K562 (cell line): ENCODE measurements at regions of chr1 and their contacts with region 1.

Region 1: DNA sequence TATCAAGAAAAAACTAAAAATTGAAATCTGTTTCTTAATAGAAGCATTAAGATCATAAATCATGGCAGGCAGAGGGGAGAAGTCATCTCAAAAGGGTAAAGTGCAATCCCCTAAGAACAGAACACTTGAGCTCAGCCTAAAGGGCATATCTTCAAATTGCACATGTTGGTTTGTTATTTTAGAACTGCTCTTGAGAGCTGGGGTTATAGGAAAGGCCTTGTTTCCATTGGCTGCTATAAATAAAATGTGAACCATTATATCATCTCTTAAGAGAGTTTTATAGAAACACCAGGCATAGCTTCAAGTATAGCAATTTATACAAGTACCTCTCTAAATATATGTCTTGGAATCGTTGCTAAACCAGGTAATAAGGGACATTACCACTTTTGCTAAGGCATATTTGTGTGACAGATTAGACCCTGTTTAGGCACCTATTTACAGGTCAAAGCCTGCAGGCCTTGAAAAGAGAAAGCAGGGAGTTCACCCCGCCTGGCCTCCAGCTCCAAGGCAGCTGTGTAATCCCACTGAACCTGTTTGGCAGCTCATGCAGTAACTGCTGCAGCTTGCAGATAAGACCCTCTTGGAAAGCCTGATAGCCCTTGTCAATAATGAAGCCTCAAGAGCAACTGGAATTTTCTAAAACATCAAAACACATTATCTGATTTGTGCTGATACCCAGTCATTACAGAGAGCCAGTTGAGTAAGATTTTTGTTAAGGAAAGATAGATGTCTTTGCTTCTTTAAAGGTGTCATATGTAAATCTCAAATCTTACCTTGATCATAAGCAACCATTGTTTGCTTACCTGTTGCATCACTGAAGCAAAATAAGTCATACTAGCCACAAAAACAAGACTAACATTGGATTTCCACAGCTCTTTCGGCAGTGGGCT is 24.2 kb upstream of the SYDE2 start:
- DNase-seq: peak; percentile 76 to 93 (median 84)
- ATAC-seq: peak; percentile 89
- H3K4me3 ChIP-seq: no peak overlapping the region
- H3K27ac ChIP-seq: peak overlapping the region; percentile 15
- H3K4me1 ChIP-seq: peaks cover 23 to 45% of the 10 kb centered on the region in 2 experiments
- H3K27me3 ChIP-seq: no peaks in the 10 kb centered on the region
- CTCF ChIP-seq: no peak
- EP300 ChIP-seq: peak; percentile 99
- POLR2A ChIP-seq: no peak
- RAD21 ChIP-seq: no peak

Region 2: GRCh38 chr1:85109475-85109874 is 115.5 kb before region 1 on chr1:
- CTCF ChIA-PET with region 1: no interaction called
- POLR2A ChIA-PET with region 1: no interaction called
- in situ Hi-C with region 1: no loop called
- intact Hi-C with region 1: no loop called
- DNase-seq: peak; percentile 23 to 76 (median 52)
- ATAC-seq: peak; percentile 100
- H3K4me3 ChIP-seq: no peak overlapping the region
- H3K27ac ChIP-seq: no peak overlapping the region
- H3K4me1 ChIP-seq: no peaks in the 10 kb centered on the region
- H3K27me3 ChIP-seq: peaks cover 0 to 6% of the 10 kb centered on the region in 2 experiments; a peak in 1 of 5 replicates
- CTCF ChIP-seq: peak; percentile 83 to 91 (median 90)
- EP300 ChIP-seq: no peak
- POLR2A ChIP-seq: no peak
- RAD21 ChIP-seq: peak; percentile 94 to 96

Region 3: DNA sequence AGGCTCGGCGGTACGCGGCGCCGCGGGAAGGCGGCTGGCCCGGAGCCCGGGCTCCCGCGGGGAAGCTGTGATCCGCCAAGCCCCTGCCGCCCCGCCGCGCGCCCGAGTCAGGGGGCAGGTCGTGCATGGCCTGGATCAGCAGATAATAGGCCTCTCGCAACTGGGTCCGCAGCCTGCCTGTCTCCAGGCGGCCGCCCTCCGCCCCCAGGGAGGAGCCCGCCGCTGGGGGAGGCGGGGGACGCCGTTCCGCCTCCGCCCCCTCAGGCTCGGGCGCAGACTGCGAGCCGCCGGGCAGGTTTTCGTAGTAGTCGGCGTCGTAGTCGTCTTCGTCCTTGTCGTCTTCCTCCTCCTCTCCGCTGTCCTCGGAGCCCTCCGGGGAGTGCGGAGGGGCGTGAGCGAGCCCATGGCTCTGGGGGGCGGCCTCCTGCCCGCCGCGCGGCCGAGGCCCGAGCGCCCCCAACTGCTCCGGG is 24.1 kb before region 1 on chr1 and contains the start of gene SYDE2:
- CTCF ChIA-PET with region 1: no interaction called
- POLR2A ChIA-PET with region 1: interaction called, 12 read pairs
- in situ Hi-C with region 1: no loop called
- intact Hi-C with region 1: loop called (anchors 1 kb)
- DNase-seq: peak; percentile 91 to 95 (median 92)
- ATAC-seq: peak; percentile 90
- H3K4me3 ChIP-seq: peak within 1 kb of the TSS; percentile 68
- H3K27ac ChIP-seq: peak within 1 kb of the TSS; percentile 90
- H3K4me1 ChIP-seq: peaks cover 3 to 17% of the 10 kb centered on the region in 2 experiments; a peak in 4 of 5 replicates
- H3K27me3 ChIP-seq: no peaks in the 10 kb centered on the region
- CTCF ChIP-seq: no peak
- EP300 ChIP-seq: no peak
- POLR2A ChIP-seq: peak; percentile 86
- RAD21 ChIP-seq: no peak
- polyA plus RNA-seq, gene SYDE2: 0.39 to 0.77 TPM

Region 4: DNA sequence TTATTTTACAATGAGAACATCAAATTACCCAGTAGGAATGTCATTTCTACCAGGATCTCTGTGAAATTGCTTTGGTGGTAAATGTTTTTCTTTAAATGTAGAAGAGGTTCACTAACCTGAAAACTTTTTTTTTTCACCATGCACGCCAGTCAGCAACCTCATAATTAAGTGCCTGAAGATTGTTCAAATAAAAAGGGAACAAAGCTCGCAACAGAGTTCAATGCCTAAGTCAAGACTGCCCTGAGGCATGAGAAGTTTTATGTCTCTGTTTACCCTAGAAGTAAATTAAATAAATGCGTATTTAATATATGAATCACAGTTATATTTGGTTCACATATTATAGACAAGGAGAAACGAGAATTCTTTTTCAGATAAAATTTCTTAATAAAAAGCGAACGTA is 10.3 kb before region 1 on chr1:
- CTCF ChIA-PET with region 1: no interaction called
- POLR2A ChIA-PET with region 1: interaction called, 14 read pairs
- in situ Hi-C with region 1: no loop called
- intact Hi-C with region 1: no loop called
- DNase-seq: no peak
- ATAC-seq: no peak
- H3K4me3 ChIP-seq: no peak overlapping the region
- H3K27ac ChIP-seq: no peak overlapping the region
- H3K4me1 ChIP-seq: peaks cover under 1 to 7% of the 10 kb centered on the region in 2 experiments; a peak in 4 of 5 replicates
- H3K27me3 ChIP-seq: no peaks in the 10 kb centered on the region
- CTCF ChIP-seq: no peak
- EP300 ChIP-seq: no peak
- POLR2A ChIP-seq: no peak
- RAD21 ChIP-seq: no peak